Mammary epithelial cell (primary cell): ENCODE measurements at regions of chr12 and their contacts with region 1.

Region 1: GRCh38 chr12:99386907-99387306 is 260.6 kb upstream of the GARIN6 start:
- DNase-seq: peak; percentile 11
- H3K4me3 ChIP-seq: no peak overlapping the region
- H3K27ac ChIP-seq: no peak overlapping the region
- H3K4me1 ChIP-seq: no peaks in the 10 kb centered on the region
- H3K27me3 ChIP-seq: peaks cover 3% of the 10 kb centered on the region
- CTCF ChIP-seq: peak; percentile 6 to 14

Region 2: DNA sequence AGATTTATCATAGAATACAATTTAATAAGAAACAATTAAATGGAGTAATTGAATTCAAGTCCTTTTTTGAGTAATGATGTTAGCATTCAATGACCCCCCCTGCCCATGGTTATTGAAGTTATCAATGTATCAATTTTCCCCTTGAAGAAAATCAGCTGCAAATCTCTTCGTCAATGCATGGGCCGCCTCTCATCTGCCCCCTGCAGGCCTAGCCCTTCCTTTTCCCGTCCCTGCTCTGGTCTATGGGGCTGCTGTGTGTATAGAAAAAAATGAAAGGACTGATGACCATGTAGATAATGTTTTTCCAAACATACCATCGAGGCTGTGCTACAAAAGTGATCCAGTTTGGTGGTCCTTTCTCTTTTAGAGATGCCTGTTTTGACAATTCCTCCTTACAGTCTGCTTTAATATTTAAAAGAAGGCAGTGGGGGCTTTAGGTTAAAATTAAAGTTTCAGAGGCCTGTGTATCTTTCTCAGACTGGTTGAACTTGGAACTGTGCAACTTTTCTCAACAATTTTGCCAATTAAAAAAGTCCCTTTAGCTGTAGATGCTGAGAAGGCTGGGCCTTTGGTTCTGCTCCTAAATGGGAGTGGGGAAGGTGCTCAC is 643.5 kb before region 1 on chr12:
- CTCF ChIA-PET with region 1: no interaction called
- dilution Hi-C with region 1: no loop called
- in situ Hi-C with region 1: no loop called
- intact Hi-C with region 1: no loop called
- DNase-seq: no peak
- H3K4me3 ChIP-seq: no peak overlapping the region
- H3K27ac ChIP-seq: no peak overlapping the region
- H3K4me1 ChIP-seq: peaks cover 6% of the 10 kb centered on the region
- H3K27me3 ChIP-seq: peaks cover 2% of the 10 kb centered on the region
- CTCF ChIP-seq: peak; percentile 46 to 48

Region 3: GRCh38 chr12:99619389-99620158 is 232.7 kb after region 1 on chr12:
- CTCF ChIA-PET with region 1: no interaction called
- dilution Hi-C with region 1: no loop called
- in situ Hi-C with region 1: no loop called
- intact Hi-C with region 1: loop called (anchors 1 kb)
- DNase-seq: peak; percentile 37
- H3K4me3 ChIP-seq: no peak overlapping the region
- H3K27ac ChIP-seq: no peak overlapping the region
- H3K4me1 ChIP-seq: no peaks in the 10 kb centered on the region
- H3K27me3 ChIP-seq: no peaks in the 10 kb centered on the region
- CTCF ChIP-seq: peak; percentile 51 to 81

Region 4: DNA sequence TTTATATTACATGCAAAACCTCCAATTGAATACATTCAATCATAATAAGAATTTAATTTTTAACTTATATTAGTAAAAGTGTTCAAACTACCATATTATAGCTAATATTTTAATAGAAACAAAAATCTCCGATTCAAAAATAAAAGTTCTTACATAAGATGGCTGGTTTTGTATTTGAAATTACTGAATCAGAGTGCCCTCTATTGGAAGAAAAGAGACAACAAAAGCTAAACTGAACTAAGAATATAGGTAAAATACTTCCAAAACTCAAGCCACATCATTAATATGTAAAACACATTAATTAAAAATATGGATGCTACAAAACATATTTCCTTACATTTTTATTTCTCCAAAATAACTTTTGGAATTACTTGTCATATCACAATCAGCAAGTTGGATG is 380.9 kb after region 1 on chr12:
- CTCF ChIA-PET with region 1: interaction called, 19 read pairs
- dilution Hi-C with region 1: no loop called
- in situ Hi-C with region 1: no loop called
- intact Hi-C with region 1: loop called (anchors 5 kb)
- DNase-seq: peak; percentile 5
- H3K4me3 ChIP-seq: no peak overlapping the region
- H3K27ac ChIP-seq: no peak overlapping the region
- H3K4me1 ChIP-seq: no peaks in the 10 kb centered on the region
- H3K27me3 ChIP-seq: no peaks in the 10 kb centered on the region
- CTCF ChIP-seq: peak; percentile 41 to 56